MCF 10A (cell line): ENCODE measurements at regions of chr1 and their contacts with region 1.

Region 1: DNA sequence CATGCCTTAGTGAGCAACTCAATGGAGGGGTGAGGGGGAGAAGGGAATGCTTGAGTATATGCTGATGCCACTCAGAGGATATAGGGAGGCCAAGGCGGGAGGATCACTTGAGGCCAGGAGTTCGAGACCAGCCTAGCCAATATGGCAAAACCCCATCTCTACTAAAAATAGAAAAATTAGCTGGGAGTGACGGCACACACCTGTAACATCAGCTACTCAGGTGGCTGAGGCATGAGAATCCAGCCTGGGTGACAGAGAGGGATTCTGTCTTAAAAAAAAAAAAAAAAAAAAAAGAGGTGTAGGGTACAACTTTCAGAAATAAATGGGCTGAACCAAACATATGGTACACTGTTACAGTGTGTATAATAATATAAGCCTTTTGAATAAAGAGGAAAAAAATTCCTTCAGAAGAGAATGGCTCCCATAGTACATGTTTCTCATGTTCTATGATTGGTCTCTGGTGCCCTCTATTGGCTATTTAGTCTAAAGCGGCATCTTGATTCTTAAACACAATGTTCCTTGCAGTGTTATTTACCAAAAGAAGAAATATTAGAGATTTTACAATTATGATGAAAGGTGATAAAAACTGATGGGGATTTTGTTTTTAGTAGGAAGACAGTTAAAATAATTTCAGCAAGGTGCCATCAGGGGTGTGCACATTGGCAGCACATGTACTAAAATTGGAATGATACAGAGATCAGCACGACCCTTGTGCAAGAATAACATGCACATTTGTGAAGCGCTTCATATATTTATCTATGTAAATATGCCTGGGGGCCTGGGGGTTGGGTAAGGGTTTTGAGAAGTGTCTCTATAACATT is 109.8 kb downstream of the PATJ start:
- DNase-seq: peak; percentile 74
- H3K4me3 Mint-ChIP-seq: no peak overlapping the region
- H3K27ac Mint-ChIP-seq: no peak overlapping the region
- H3K4me1 Mint-ChIP-seq: no peaks in the 10 kb centered on the region
- H3K27me3 Mint-ChIP-seq: no peaks in the 10 kb centered on the region
- CTCF ChIP-seq: peak; percentile 53

Region 2: GRCh38 chr1:60153961-60154360 is 1698.1 kb before region 1 on chr1:
- CTCF ChIA-PET with region 1: no interaction called
- POLR2A ChIA-PET with region 1: no interaction called
- intact Hi-C with region 1: loop called (anchors 10 kb)
- DNase-seq: no peak
- H3K4me3 Mint-ChIP-seq: no peak overlapping the region
- H3K27ac Mint-ChIP-seq: no peak overlapping the region
- H3K4me1 Mint-ChIP-seq: no peaks in the 10 kb centered on the region
- H3K27me3 Mint-ChIP-seq: peaks cover 22% of the 10 kb centered on the region
- CTCF ChIP-seq: no peak

Region 3: GRCh38 chr1:60848583-60849188 is 1003.4 kb before region 1 on chr1:
- CTCF ChIA-PET with region 1: interaction called, 3 read pairs
- POLR2A ChIA-PET with region 1: no interaction called
- intact Hi-C with region 1: loop called (anchors 1 kb)
- DNase-seq: peak; percentile 38
- H3K4me3 Mint-ChIP-seq: no peak overlapping the region
- H3K27ac Mint-ChIP-seq: no peak overlapping the region
- H3K4me1 Mint-ChIP-seq: peaks cover 13% of the 10 kb centered on the region
- H3K27me3 Mint-ChIP-seq: peaks cover 20% of the 10 kb centered on the region
- CTCF ChIP-seq: peak; percentile 71

Region 4: DNA sequence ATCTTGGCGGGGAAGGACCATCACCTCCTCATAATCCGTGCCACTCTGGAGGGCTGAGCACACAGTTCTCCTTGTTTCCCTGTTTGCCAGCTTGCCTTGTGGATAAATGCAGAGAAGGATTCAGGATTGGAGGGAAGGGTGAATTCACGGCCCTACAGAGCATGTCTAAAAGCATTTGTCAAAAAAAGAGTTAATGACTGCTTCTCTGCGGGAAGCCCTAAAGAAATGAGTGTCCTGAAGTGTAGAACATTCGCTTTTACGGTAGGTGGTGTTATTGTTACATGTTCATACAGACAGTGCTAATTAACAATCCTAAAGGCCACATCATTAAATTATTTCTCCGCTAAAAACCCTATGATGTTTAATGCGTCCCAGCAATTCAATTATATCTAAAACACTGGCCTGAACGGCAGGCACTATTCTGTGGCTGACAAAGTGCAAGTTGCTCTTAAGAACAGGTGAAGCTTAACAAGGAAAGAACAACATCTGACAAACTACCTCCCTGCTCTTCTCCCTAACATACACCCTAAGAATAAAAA is 882.0 kb before region 1 on chr1:
- CTCF ChIA-PET with region 1: interaction called, 4 read pairs
- POLR2A ChIA-PET with region 1: no interaction called
- intact Hi-C with region 1: loop called (anchors 1 kb)
- DNase-seq: peak; percentile 43
- H3K4me3 Mint-ChIP-seq: no peak overlapping the region
- H3K27ac Mint-ChIP-seq: no peak overlapping the region
- H3K4me1 Mint-ChIP-seq: peaks cover 18% of the 10 kb centered on the region
- H3K27me3 Mint-ChIP-seq: no peaks in the 10 kb centered on the region
- CTCF ChIP-seq: peak; percentile 46

Region 5: GRCh38 chr1:61049850-61050540 is 802.1 kb before region 1 on chr1:
- CTCF ChIA-PET with region 1: interaction called, 3 read pairs
- POLR2A ChIA-PET with region 1: no interaction called
- intact Hi-C with region 1: loop called (anchors 10 kb)
- DNase-seq: peak; percentile 90
- H3K4me3 Mint-ChIP-seq: peak overlapping the region; percentile 76
- H3K27ac Mint-ChIP-seq: peak overlapping the region; percentile 19
- H3K4me1 Mint-ChIP-seq: peaks cover 20% of the 10 kb centered on the region
- H3K27me3 Mint-ChIP-seq: no peaks in the 10 kb centered on the region
- CTCF ChIP-seq: peak; percentile 93

Region 6: DNA sequence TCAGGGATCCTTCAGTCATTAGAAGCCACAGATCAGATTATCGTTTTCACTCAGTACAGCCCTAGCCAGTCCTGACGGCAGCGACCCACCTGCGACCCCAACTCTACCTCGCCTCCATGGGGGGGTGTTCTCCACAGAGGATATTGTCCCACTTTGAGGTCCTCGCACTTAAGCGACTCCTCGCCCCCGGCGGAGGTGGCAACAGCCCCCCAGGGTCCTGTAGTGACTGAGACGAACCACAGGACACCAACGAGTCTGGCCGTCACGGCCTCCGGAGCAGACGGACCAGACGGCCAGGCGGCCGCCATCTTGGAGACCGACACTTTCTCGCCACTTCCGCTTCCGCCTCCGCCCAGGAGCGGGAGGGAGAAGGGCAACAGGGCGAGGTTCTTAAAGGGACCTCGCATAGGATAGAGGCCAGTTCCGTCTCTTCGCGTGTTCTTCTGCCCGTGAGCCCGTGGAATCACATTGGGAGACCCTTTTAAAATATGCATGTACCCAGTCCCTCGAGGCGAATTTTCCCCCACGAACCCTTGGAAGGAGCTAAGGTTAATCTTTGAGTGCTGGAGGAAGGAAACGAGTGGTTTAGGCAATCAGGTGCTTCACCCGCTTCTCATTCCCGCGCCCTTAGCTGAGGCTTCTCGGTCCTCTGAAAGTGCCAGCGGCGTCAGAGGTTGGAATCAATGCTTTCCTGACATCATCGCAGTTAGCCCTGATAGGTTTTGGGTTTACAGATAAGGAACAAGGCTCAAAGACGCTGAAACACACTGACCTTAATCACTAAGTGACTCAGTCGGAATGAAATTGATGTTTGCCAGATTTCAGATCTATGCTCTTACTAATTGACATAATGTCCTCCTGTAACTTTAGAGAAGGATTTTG is 127.0 kb before region 1 on chr1 and contains the start of gene TM2D1:
- CTCF ChIA-PET with region 1: no interaction called
- POLR2A ChIA-PET with region 1: no interaction called
- intact Hi-C with region 1: loop called (anchors 1 kb)
- DNase-seq: peak; percentile 92
- H3K4me3 Mint-ChIP-seq: peak within 1 kb of the TSS; percentile 100
- H3K27ac Mint-ChIP-seq: peak within 1 kb of the TSS; percentile 100
- H3K4me1 Mint-ChIP-seq: peaks cover 11% of the 10 kb centered on the region
- H3K27me3 Mint-ChIP-seq: no peaks in the 10 kb centered on the region
- CTCF ChIP-seq: no peak
- total RNA-seq, gene TM2D1: 29.4 and 36.4 TPM in 2 replicates

Region 7: DNA sequence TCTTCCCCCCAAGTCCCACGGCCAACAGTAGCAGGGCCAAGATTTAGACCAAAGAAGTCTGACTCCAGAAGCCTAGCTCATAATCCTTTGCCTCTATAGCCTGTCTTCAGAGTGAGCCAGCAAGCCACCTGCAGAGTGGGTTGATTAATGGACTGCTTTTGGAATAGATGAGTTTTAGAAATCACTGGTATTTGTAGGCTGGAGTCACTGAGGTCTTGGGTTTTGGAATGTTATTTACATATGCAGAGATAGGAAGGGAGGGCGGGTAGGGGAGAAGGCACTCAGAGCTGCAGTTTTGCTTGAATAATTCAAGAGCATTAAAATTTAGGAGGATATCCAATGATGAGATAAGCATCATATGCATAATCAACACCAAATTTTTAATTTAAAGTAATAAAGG is 251.8 kb after region 1 on chr1:
- CTCF ChIA-PET with region 1: no interaction called
- POLR2A ChIA-PET with region 1: no interaction called
- intact Hi-C with region 1: no loop called
- DNase-seq: no peak
- H3K4me3 Mint-ChIP-seq: no peak overlapping the region
- H3K27ac Mint-ChIP-seq: no peak overlapping the region
- H3K4me1 Mint-ChIP-seq: no peaks in the 10 kb centered on the region
- H3K27me3 Mint-ChIP-seq: no peaks in the 10 kb centered on the region
- CTCF ChIP-seq: no peak

Region 8: GRCh38 chr1:62230709-62231108 is 378.6 kb after region 1 on chr1:
- CTCF ChIA-PET with region 1: no interaction called
- POLR2A ChIA-PET with region 1: no interaction called
- intact Hi-C with region 1: no loop called
- DNase-seq: peak; percentile 97
- H3K4me3 Mint-ChIP-seq: peak overlapping the region; percentile 6
- H3K27ac Mint-ChIP-seq: peak overlapping the region; percentile 43
- H3K4me1 Mint-ChIP-seq: peaks cover 40% of the 10 kb centered on the region
- H3K27me3 Mint-ChIP-seq: no peaks in the 10 kb centered on the region
- CTCF ChIP-seq: no peak